Prostate gland (tissue), 2 donors: ENCODE measurements at regions of chr7 and their contacts with region 1.

Region 1: GRCh38 chr7:112206238-112207044 is at the starts of genes DOCK4 and ZNF277:
- DNase-seq: peak; percentile 99
- H3K4me3 ChIP-seq: peak within 1 kb of the TSS; percentile 81 to 90
- H3K27ac ChIP-seq: peak within 1 kb of the TSS; percentile 82 to 83
- H3K4me1 ChIP-seq: no peaks in the 10 kb centered on the region
- H3K27me3 ChIP-seq: no peaks in the 10 kb centered on the region
- CTCF ChIP-seq: peak in 1 of 4 experiments; percentile 10
- POLR2A ChIP-seq: peak; percentile 94
- total RNA-seq, gene DOCK4: 21.8 to 37.4 TPM
- total RNA-seq, gene ZNF277: 23.0 to 33.1 TPM

Region 2: DNA sequence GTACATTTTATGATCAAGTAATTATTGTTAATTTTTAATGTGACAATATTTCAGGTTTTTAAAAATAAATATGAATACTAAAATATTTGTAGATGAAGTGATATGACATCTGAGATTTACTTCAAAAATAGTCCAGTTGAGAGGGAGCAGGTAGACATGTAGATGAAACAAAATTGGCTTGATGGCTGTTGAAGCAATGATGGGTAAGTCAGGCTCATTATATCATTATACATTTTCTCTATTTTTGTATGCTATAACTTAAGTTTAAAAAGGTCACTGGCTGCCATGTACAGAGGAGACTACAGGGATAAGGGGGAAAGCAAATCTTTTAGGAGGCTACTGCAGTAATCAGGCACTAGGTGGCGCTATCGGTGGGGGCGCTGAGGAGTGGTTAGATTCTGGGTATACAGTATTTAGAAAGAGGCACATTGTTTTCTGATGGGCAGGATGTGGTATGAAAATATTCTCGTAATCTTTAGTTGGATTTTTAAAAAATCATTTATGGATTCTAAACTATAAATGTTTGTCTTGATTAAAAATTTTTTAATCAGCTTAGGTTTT is 454.3 kb before region 1 on chr7:
- intact Hi-C with region 1: loop called (anchors 10 kb)
- DNase-seq: no peak
- H3K4me3 ChIP-seq: no peak overlapping the region
- H3K27ac ChIP-seq: no peak overlapping the region
- H3K4me1 ChIP-seq: no peaks in the 10 kb centered on the region
- H3K27me3 ChIP-seq: no peaks in the 10 kb centered on the region
- CTCF ChIP-seq: peak in 3 of 4 experiments; percentile 45 to 57 (median 52)
- POLR2A ChIP-seq: no peak

Region 3: GRCh38 chr7:111855161-111855856 is 351.1 kb before region 1 on chr7:
- intact Hi-C with region 1: loop called (anchors 5 kb)
- DNase-seq: peak; percentile 44
- H3K4me3 ChIP-seq: no peak overlapping the region
- H3K27ac ChIP-seq: peak overlapping the region in 1 of 2 donors; percentile 12
- H3K4me1 ChIP-seq: no peaks in the 10 kb centered on the region
- H3K27me3 ChIP-seq: no peaks in the 10 kb centered on the region
- CTCF ChIP-seq: peak; percentile 9 to 52 (median 33)
- POLR2A ChIP-seq: no peak

Region 4: GRCh38 chr7:111953611-111954010 is 252.8 kb before region 1 on chr7:
- intact Hi-C with region 1: loop called (anchors 10 kb)
- DNase-seq: peak; percentile 20
- H3K4me3 ChIP-seq: no peak overlapping the region
- H3K27ac ChIP-seq: no peak overlapping the region
- H3K4me1 ChIP-seq: no peaks in the 10 kb centered on the region
- H3K27me3 ChIP-seq: no peaks in the 10 kb centered on the region
- CTCF ChIP-seq: peak in 2 of 4 experiments; percentile 25 to 49
- POLR2A ChIP-seq: no peak

Region 5: GRCh38 chr7:112266595-112267270 is 60.3 kb after region 1 on chr7:
- intact Hi-C with region 1: loop called (anchors 10 kb)
- DNase-seq: no peak
- H3K4me3 ChIP-seq: no peak overlapping the region
- H3K27ac ChIP-seq: no peak overlapping the region
- H3K4me1 ChIP-seq: peaks cover 11% of the 10 kb centered on the region
- H3K27me3 ChIP-seq: no peaks in the 10 kb centered on the region
- CTCF ChIP-seq: no peak
- POLR2A ChIP-seq: no peak

Region 6: DNA sequence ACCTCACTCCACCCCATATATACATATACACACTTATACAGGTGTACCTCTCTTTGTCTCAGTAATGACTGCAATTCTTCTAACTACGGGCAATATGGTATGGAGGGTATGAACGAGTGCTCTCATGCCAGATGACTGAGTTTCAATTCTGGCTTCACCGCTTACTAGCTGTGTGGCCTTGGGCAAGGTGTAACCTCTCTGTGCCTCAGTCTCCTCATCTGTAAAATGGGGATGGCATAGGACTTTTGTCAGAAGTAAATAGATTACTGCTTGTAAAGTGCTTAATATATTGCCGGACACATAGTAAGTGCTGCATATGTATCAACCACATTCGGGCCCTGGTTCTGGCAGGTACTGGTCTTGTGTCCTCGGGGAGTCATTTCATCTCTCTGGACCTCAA is 183.7 kb after region 1 on chr7:
- intact Hi-C with region 1: loop called (anchors 5 kb)
- DNase-seq: no peak
- H3K4me3 ChIP-seq: no peak overlapping the region
- H3K27ac ChIP-seq: no peak overlapping the region
- H3K4me1 ChIP-seq: no peaks in the 10 kb centered on the region
- H3K27me3 ChIP-seq: no peaks in the 10 kb centered on the region
- CTCF ChIP-seq: no peak
- POLR2A ChIP-seq: no peak

Region 7: DNA sequence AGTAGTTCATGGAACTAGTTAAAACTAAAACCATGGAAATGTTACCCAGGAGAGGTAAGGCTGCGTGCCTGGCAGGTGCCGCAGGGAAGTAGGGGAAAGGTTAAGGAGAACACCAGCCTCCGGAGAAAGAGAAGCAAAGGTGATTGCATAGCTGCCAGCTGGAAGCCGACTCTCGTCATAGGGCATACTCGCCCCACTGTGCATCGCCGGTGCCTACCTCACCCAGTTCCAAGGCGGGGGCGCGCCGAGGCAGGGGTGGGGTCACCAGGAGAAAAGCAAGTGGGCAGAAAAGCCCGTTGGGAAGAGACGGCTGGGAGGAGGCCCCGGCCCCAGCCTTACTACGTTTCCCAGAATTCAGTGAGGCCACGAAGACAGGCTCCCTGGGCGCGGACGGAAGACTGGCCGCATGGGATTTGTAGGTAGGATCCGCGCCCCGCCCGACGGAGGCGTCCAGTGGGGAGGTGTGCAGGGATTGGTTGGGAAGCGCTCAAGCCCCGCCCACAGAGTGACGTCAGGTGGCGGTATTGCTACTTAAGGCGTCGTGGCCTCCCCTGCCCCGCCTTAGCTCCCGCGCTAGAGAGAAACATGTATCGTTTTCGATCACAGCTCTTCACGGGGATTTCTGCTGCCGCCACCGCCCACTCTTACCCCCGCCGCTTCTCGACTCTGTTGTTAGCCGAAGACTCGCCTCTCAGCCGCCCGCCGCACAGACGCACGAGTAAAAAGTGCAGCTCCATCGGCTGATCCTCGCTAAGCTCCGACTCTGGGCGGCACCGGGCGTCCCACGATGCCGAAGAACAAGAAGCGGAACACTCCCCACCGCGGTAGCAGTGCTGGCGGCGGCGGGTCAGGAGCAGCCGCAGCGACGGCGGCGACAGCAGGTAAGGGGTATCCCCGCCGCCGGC is 243.7 kb after region 1 on chr7 and contains the start of gene IFRD1:
- intact Hi-C with region 1: loop called (anchors 5 kb)
- DNase-seq: peak; percentile 99
- H3K4me3 ChIP-seq: peak within 1 kb of the TSS; percentile 76 to 98
- H3K27ac ChIP-seq: peak within 1 kb of the TSS; percentile 95 to 99
- H3K4me1 ChIP-seq: peaks cover 9% of the 10 kb centered on the region
- H3K27me3 ChIP-seq: no peaks in the 10 kb centered on the region
- CTCF ChIP-seq: peak in 2 of 4 experiments; percentile 12 to 16
- POLR2A ChIP-seq: peak; percentile 93
- total RNA-seq, gene IFRD1: 57.5 to 58.5 TPM